ENCODE measurements at regions of chr20 and their contacts with region 1.

Region 1: GRCh38 chr20:34129518-34130162 is 17.6 kb upstream of the EIF2S2 start:
- DNase-seq: peak; percentile 68
- ATAC-seq: peak; percentile 98
- H3K4me3 Mint-ChIP-seq: no peak overlapping the region
- H3K27ac Mint-ChIP-seq: no peak overlapping the region
- H3K4me1 Mint-ChIP-seq: peaks cover 10% of the 10 kb centered on the region
- H3K27me3 Mint-ChIP-seq: peaks cover 5% of the 10 kb centered on the region
- CTCF ChIP-seq: peak; percentile 93

Region 2: DNA sequence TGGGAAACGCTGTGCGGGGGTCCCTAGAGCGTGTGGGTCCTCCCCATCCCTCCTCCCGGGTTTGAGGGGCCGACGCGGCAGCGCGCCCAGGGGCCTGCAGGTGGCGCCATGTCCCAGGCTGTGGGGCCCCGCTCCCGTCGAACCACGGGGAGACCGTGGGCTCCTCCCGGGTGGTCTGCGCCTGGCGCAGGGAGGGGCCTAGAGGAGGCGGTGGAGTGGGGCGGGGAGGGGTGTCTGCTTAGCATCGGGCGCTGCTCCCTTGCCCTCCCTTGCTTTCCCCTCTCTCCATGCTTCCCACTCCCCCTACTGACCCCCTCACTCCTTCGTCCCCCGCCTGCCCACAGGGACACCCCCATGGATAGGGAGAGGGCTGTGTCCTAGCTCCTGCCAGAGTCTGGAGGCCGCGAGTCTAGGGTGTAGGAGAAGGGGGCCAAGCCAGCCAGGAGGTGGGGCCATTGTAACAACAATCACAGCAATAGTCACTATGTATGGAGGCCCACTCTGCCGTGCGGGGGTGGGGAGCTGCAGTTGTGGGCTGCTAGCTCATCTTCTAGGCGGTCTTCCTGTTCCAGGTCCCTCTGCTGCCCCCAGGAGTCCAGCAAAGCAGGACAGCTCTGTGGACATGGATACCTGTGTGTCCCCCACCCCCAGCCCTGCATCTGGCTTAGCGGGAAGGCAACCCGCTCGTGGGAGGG is 266.8 kb before region 1 on chr20:
- CTCF ChIA-PET with region 1: interaction called, 10 read pairs
- POLR2A ChIA-PET with region 1: no interaction called
- intact Hi-C with region 1: no loop called
- DNase-seq: peak; percentile 73
- ATAC-seq: peak; percentile 71
- H3K4me3 Mint-ChIP-seq: no peak overlapping the region
- H3K27ac Mint-ChIP-seq: no peak overlapping the region
- H3K4me1 Mint-ChIP-seq: peaks cover 19% of the 10 kb centered on the region
- H3K27me3 Mint-ChIP-seq: no peaks in the 10 kb centered on the region
- CTCF ChIP-seq: peak; percentile 91

Region 3: GRCh38 chr20:33933469-33933909 is 196.2 kb before region 1 on chr20:
- CTCF ChIA-PET with region 1: interaction called, 7 read pairs
- POLR2A ChIA-PET with region 1: no interaction called
- intact Hi-C with region 1: loop called (anchors 10 kb)
- DNase-seq: peak; percentile 78
- ATAC-seq: peak; percentile 95
- H3K4me3 Mint-ChIP-seq: no peak overlapping the region
- H3K27ac Mint-ChIP-seq: no peak overlapping the region
- H3K4me1 Mint-ChIP-seq: no peaks in the 10 kb centered on the region
- H3K27me3 Mint-ChIP-seq: no peaks in the 10 kb centered on the region
- CTCF ChIP-seq: peak; percentile 23

Measured in activated CD8-positive, alpha-beta T cell treated with anti-CD3 and anti-CD28 coated beads for 36 hours (primary cell).